Naive thymus-derived CD4-positive, alpha-beta T cell (primary cell): ENCODE measurements at regions of chr2 and their contacts with region 1.

Region 1: GRCh38 chr2:201118121-201118960 is 2.4 kb downstream of the CFLAR start:
- DNase-seq: peak; percentile 66 to 85 (median 79)
- ATAC-seq: peak; percentile 65
- H3K4me3 ChIP-seq: peak overlapping the region; percentile 87
- H3K4me3 Mint-ChIP-seq: peak overlapping the region; percentile 90 to 100 (median 97)
- H3K27ac ChIP-seq: peak overlapping the region; percentile 93
- H3K27ac Mint-ChIP-seq: peak overlapping the region; percentile 90 to 100 (median 98)
- H3K4me1 ChIP-seq: peaks cover 23 to 36% of the 10 kb centered on the region in 2 donors
- H3K4me1 Mint-ChIP-seq: peaks cover 31 to 64% (median 50%) of the 10 kb centered on the region in 7 donors
- H3K27me3 ChIP-seq: no peaks in the 10 kb centered on the region
- H3K27me3 Mint-ChIP-seq: peaks cover 0 to 2% (median 0%) of the 10 kb centered on the region in 5 donors

Region 2: DNA sequence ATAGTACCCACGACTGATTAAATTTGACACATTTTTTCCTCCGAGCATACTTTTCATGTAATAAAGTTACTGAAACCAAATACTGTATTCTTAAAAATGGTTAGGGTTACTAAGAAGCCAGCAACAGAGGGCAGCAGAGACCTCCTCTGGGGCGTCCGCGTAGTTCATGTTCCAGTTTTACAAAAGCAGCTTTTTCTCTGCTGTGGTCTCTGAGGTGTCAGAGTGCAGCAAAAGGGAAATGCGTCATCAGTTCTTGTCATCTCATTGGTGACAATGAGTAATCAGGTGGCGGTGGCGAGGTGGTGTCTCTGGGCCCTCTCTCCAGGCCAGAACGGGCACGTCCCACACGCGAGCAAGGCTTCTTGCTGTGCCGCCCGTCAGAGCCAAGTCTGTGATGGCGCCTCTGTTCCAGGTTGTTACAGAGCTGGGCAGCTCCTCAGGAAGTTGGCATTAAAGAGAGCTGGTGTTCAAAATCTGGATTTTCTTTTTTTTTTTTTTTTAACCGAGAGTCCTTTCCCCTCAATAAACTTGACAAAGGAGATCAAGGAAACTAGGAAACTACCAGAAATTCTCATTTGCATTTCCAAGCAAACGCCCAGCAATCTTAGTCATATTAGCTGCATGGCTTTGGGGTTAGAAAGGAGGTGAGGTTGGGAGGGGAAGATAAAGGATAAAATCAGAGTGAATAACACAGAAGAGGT is 405.2 kb before region 1 on chr2:
- CTCF ChIA-PET with region 1: interaction called, 4 read pairs
- POLR2A ChIA-PET with region 1: interaction called, 15 read pairs
- intact Hi-C with region 1: loop called (anchors 1 kb)
- DNase-seq: peak; percentile 72 to 96 (median 94)
- ATAC-seq: peak; percentile 98
- H3K4me3 ChIP-seq: peak overlapping the region; percentile 24
- H3K4me3 Mint-ChIP-seq: peak overlapping the region; percentile 75 to 88 (median 81)
- H3K27ac ChIP-seq: peak overlapping the region; percentile 82
- H3K27ac Mint-ChIP-seq: peak overlapping the region; percentile 97 to 100 (median 99)
- H3K4me1 ChIP-seq: peaks cover 5 to 8% of the 10 kb centered on the region in 2 donors
- H3K4me1 Mint-ChIP-seq: peaks cover 0 to 25% (median 12%) of the 10 kb centered on the region in 7 donors
- H3K27me3 ChIP-seq: no peaks in the 10 kb centered on the region
- H3K27me3 Mint-ChIP-seq: peaks cover 0 to 4% (median 0%) of the 10 kb centered on the region in 5 donors

Region 3: GRCh38 chr2:200901459-200902072 is 216.8 kb before region 1 on chr2:
- CTCF ChIA-PET with region 1: no interaction called
- POLR2A ChIA-PET with region 1: interaction called, 3 read pairs
- intact Hi-C with region 1: loop called (anchors 2 kb)
- DNase-seq: peak; percentile 18 to 83 (median 76)
- ATAC-seq: peak; percentile 100
- H3K4me3 ChIP-seq: no peak overlapping the region
- H3K4me3 Mint-ChIP-seq: no peak overlapping the region
- H3K27ac ChIP-seq: no peak overlapping the region
- H3K27ac Mint-ChIP-seq: peak overlapping the region; percentile 4 to 86 (median 44)
- H3K4me1 ChIP-seq: no peaks in the 10 kb centered on the region
- H3K4me1 Mint-ChIP-seq: peaks cover 0 to 27% (median 6%) of the 10 kb centered on the region in 7 donors
- H3K27me3 ChIP-seq: no peaks in the 10 kb centered on the region
- H3K27me3 Mint-ChIP-seq: no peaks in the 10 kb centered on the region

Region 4: DNA sequence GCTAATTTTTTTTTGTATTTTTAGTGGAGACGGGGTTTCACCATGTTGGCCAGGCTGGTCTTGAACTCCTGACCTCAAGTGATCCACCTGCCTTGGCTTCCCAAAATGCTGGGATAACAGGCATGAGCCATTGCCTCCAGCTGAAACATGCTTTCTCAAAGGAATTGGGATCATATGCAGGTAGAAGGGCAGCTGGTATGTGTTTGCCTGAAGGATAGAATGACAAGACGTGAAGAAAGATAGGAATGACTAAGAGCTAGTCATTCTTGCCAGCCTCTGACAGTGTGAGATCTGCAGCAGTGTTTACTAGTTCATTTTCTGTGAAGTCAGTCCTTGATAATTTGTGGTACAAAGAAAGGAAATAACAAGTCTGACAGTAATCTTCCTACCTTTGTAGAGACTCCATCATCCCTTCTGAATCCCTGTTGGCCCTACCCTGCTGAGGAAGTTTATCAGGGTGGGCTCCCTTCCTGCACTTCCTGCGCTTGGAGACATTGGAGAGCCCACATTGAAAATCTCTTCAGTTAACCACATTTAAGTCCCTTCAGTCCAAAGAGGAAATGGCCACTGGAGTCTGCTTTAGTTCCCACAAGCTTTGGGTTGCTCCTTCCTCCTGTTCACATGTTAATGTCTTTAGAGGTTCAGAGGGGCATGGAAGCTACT is 12.3 kb after region 1 on chr2:
- CTCF ChIA-PET with region 1: interaction called, 4 read pairs
- POLR2A ChIA-PET with region 1: interaction called, 3 read pairs
- intact Hi-C with region 1: loop called (anchors 1 kb)
- DNase-seq: peak in 7 of 9 donors; percentile 37 to 59 (median 53)
- ATAC-seq: peak; percentile 71
- H3K4me3 ChIP-seq: peak overlapping the region; percentile 28
- H3K4me3 Mint-ChIP-seq: peak overlapping the region; percentile 54 to 88 (median 72)
- H3K27ac ChIP-seq: peak overlapping the region; percentile 27
- H3K27ac Mint-ChIP-seq: peak overlapping the region; percentile 89 to 98 (median 96)
- H3K4me1 ChIP-seq: peaks cover 57 to 63% of the 10 kb centered on the region in 2 donors
- H3K4me1 Mint-ChIP-seq: peaks cover 61 to 80% (median 76%) of the 10 kb centered on the region in 7 donors
- H3K27me3 ChIP-seq: no peaks in the 10 kb centered on the region
- H3K27me3 Mint-ChIP-seq: no peaks in the 10 kb centered on the region

Region 5: GRCh38 chr2:201158111-201158929 is 40.0 kb after region 1 on chr2:
- CTCF ChIA-PET with region 1: interaction called, 68 read pairs
- POLR2A ChIA-PET with region 1: interaction called, 78 read pairs
- intact Hi-C with region 1: loop called (anchors 1 kb)
- DNase-seq: peak in 7 of 9 donors; percentile 62 to 78 (median 72)
- ATAC-seq: peak; percentile 92
- H3K4me3 ChIP-seq: no peak overlapping the region
- H3K4me3 Mint-ChIP-seq: peak overlapping the region in 3 of 10 donors; percentile 16 to 64 (median 33)
- H3K27ac ChIP-seq: peak overlapping the region; percentile 52
- H3K27ac Mint-ChIP-seq: peak overlapping the region; percentile 26 to 93 (median 89)
- H3K4me1 ChIP-seq: peaks cover 6 to 7% of the 10 kb centered on the region in 2 donors
- H3K4me1 Mint-ChIP-seq: peaks cover 12 to 35% (median 16%) of the 10 kb centered on the region in 7 donors
- H3K27me3 ChIP-seq: no peaks in the 10 kb centered on the region
- H3K27me3 Mint-ChIP-seq: no peaks in the 10 kb centered on the region

Region 6: GRCh38 chr2:201451292-201452057 is 333.1 kb after region 1 on chr2 and contains the starts of genes STRADB and TRAK2:
- CTCF ChIA-PET with region 1: no interaction called
- POLR2A ChIA-PET with region 1: interaction called, 7 read pairs
- intact Hi-C with region 1: loop called (anchors 1 to 5 kb)
- DNase-seq: peak; percentile 84 to 95 (median 92)
- ATAC-seq: peak; percentile 96
- H3K4me3 ChIP-seq: peak within 1 kb of the TSS; percentile 96
- H3K4me3 Mint-ChIP-seq: peak within 1 kb of the TSS; percentile 94 to 98 (median 97)
- H3K27ac ChIP-seq: peak within 1 kb of the TSS; percentile 83
- H3K27ac Mint-ChIP-seq: peak within 1 kb of the TSS; percentile 85 to 97 (median 95)
- H3K4me1 ChIP-seq: peaks cover 33 to 39% of the 10 kb centered on the region in 2 donors
- H3K4me1 Mint-ChIP-seq: peaks cover 27 to 69% (median 41%) of the 10 kb centered on the region in 7 donors
- H3K27me3 ChIP-seq: no peaks in the 10 kb centered on the region
- H3K27me3 Mint-ChIP-seq: peaks cover 0 to 8% (median 0%) of the 10 kb centered on the region in 5 donors
- total RNA-seq, gene STRADB: 11.9 to 18.4 (median 16.1) TPM
- total RNA-seq, gene TRAK2: 27.8 to 47.6 (median 35.2) TPM

Region 7: DNA sequence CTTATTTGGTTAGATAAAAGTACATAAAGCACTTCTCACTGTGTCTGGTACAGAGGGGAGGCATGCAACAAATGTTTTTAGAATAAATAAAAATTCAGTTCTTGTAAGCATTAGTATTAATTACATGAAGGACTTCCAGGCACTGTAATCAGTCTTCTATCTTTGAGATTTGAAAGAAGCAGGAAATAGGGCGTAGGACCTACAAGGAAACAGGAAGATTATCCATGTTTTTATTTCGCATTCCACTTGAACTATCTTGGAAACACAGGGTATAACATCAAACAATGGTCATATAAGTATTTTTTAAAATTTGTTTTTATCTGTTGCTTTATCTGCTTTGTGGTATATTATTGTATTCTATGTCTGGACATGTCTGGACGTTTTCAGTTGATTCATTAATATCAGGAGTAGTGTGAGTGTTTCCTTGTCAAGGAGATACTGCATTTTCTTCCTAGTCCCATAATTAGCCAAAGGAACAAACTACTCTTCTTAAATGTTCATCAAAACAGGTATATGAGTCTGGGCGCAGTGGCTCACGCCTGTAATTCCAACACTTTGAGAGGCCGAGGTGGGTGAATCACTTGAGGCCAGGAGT is 1290.3 kb after region 1 on chr2:
- CTCF ChIA-PET with region 1: no interaction called
- POLR2A ChIA-PET with region 1: no interaction called
- intact Hi-C with region 1: no loop called
- DNase-seq: no peak
- ATAC-seq: no peak
- H3K4me3 ChIP-seq: no peak overlapping the region
- H3K4me3 Mint-ChIP-seq: no peak overlapping the region
- H3K27ac ChIP-seq: no peak overlapping the region
- H3K27ac Mint-ChIP-seq: no peak overlapping the region
- H3K4me1 ChIP-seq: no peaks in the 10 kb centered on the region
- H3K4me1 Mint-ChIP-seq: peaks cover 0 to 22% (median 4%) of the 10 kb centered on the region in 7 donors
- H3K27me3 ChIP-seq: no peaks in the 10 kb centered on the region
- H3K27me3 Mint-ChIP-seq: no peaks in the 10 kb centered on the region